Lower leg skin (tissue), 4 donors: ENCODE measurements at regions of chr6 and their contacts with region 1.

Region 1: GRCh38 chr6:79801362-79801761 is 146.0 kb downstream of the ELOVL4 start:
- DNase-seq: no peak
- H3K4me3 ChIP-seq: no peak overlapping the region
- CTCF ChIP-seq: no peak
- POLR2A ChIP-seq: no peak

Region 2: GRCh38 chr6:79833264-79833963 is 32.1 kb after region 1 on chr6:
- intact Hi-C with region 1: loop called (anchors 1 kb)
- DNase-seq: no peak
- H3K4me3 ChIP-seq: no peak overlapping the region
- CTCF ChIP-seq: no peak
- POLR2A ChIP-seq: no peak